ENCODE measurements at regions of chr5 and their contacts with region 1.

Region 1: GRCh38 chr5:37248970-37249686 is at the start of gene CPLANE1:
- DNase-seq: peak; percentile 63
- H3K4me3 Mint-ChIP-seq: peak within 1 kb of the TSS; percentile 74
- H3K27ac Mint-ChIP-seq: no peak within 1 kb of the TSS
- H3K4me1 Mint-ChIP-seq: peaks cover 7% of the 10 kb centered on the region
- H3K27me3 Mint-ChIP-seq: no peaks in the 10 kb centered on the region
- total RNA-seq, gene CPLANE1: 4.4 to 5.8 TPM

Region 2: GRCh38 chr5:37197340-37198050 is 51.6 kb before region 1 on chr5:
- CTCF ChIA-PET with region 1: no interaction called
- POLR2A ChIA-PET with region 1: no interaction called
- intact Hi-C with region 1: loop called (anchors 5 kb)
- DNase-seq: no peak
- H3K4me3 Mint-ChIP-seq: peak overlapping the region; percentile 2
- H3K27ac Mint-ChIP-seq: peak overlapping the region; percentile 30
- H3K4me1 Mint-ChIP-seq: peaks cover 18% of the 10 kb centered on the region
- H3K27me3 Mint-ChIP-seq: no peaks in the 10 kb centered on the region

Region 3: GRCh38 chr5:37319037-37319782 is 70.1 kb after region 1 on chr5:
- CTCF ChIA-PET with region 1: no interaction called
- POLR2A ChIA-PET with region 1: no interaction called
- intact Hi-C with region 1: no loop called
- DNase-seq: no peak
- H3K4me3 Mint-ChIP-seq: no peak overlapping the region
- H3K27ac Mint-ChIP-seq: no peak overlapping the region
- H3K4me1 Mint-ChIP-seq: no peaks in the 10 kb centered on the region
- H3K27me3 Mint-ChIP-seq: no peaks in the 10 kb centered on the region

Region 4: GRCh38 chr5:37370864-37371726 is 122.0 kb after region 1 on chr5 and contains the start of gene NUP155:
- CTCF ChIA-PET with region 1: no interaction called
- POLR2A ChIA-PET with region 1: interaction called, 6 read pairs
- intact Hi-C with region 1: loop called (anchors 2 kb)
- DNase-seq: peak; percentile 94
- H3K4me3 Mint-ChIP-seq: peak within 1 kb of the TSS; percentile 94
- H3K27ac Mint-ChIP-seq: peak within 1 kb of the TSS; percentile 90
- H3K4me1 Mint-ChIP-seq: peaks cover 24% of the 10 kb centered on the region
- H3K27me3 Mint-ChIP-seq: no peaks in the 10 kb centered on the region
- total RNA-seq, gene NUP155: 74.6 to 75.6 TPM